H1 (cell line): ENCODE measurements at regions of chr20 and their contacts with region 1.

Region 1: GRCh38 chr20:36886859-36887751 is 11.2 kb downstream of the TLDC2 start:
- DNase-seq: peak; percentile 86 to 99
- H3K4me3 ChIP-seq: 0 out of 8 replicates have a peak overlapping the region, but pooled peaks of 1 of the 4 experiments have one; percentile 19
- H3K27ac ChIP-seq: no peak overlapping the region; the same call in 1 of the 2 replicates
- H3K4me1 ChIP-seq: peaks cover 4 to 12% (median 7%) of the 10 kb centered on the region in 4 experiments
- H3K27me3 ChIP-seq: no peaks in the 10 kb centered on the region
- CTCF ChIP-seq: peak; percentile 92 to 98 (median 92)
- EP300 ChIP-seq: no peak; a peak in 1 of 3 replicates
- POLR2A ChIP-seq: no peak
- RAD21 ChIP-seq: peak; percentile 98

Region 2: GRCh38 chr20:36700438-36700837 is 186.7 kb before region 1 on chr20:
- CTCF ChIA-PET with region 1: no interaction called
- POLR2A ChIA-PET with region 1: no interaction called
- DNase-seq: no peak
- H3K4me3 ChIP-seq: no peak overlapping the region
- H3K27ac ChIP-seq: no peak overlapping the region
- H3K4me1 ChIP-seq: peaks cover 0 to 12% (median 2%) of the 10 kb centered on the region in 4 experiments; a peak in 2 of 7 replicates
- H3K27me3 ChIP-seq: no peaks in the 10 kb centered on the region
- CTCF ChIP-seq: no peak
- EP300 ChIP-seq: no peak
- POLR2A ChIP-seq: no peak
- RAD21 ChIP-seq: no peak

Region 3: GRCh38 chr20:36745927-36746659 is 141.0 kb before region 1 on chr20 and contains the start of gene NDRG3:
- CTCF ChIA-PET with region 1: interaction called, 10 read pairs
- POLR2A ChIA-PET with region 1: no interaction called
- DNase-seq: peak; percentile 85 to 89
- H3K4me3 ChIP-seq: peak within 1 kb of the TSS; percentile 60 to 92 (median 87)
- H3K27ac ChIP-seq: peak within 1 kb of the TSS; percentile 22; the same call in 1 of the 2 replicates
- H3K4me1 ChIP-seq: peaks cover 0 to 7% (median 4%) of the 10 kb centered on the region in 4 experiments; a peak in 4 of 7 replicates
- H3K27me3 ChIP-seq: no peaks in the 10 kb centered on the region
- CTCF ChIP-seq: no peak
- EP300 ChIP-seq: no peak
- POLR2A ChIP-seq: peak in 1 of 2 experiments; percentile 28; a peak in 1 of 3 replicates
- RAD21 ChIP-seq: no peak; a peak in 2 of 4 replicates
- total RNA-seq, gene NDRG3: 32.3 and 32.5 TPM in 2 replicates

Region 4: DNA sequence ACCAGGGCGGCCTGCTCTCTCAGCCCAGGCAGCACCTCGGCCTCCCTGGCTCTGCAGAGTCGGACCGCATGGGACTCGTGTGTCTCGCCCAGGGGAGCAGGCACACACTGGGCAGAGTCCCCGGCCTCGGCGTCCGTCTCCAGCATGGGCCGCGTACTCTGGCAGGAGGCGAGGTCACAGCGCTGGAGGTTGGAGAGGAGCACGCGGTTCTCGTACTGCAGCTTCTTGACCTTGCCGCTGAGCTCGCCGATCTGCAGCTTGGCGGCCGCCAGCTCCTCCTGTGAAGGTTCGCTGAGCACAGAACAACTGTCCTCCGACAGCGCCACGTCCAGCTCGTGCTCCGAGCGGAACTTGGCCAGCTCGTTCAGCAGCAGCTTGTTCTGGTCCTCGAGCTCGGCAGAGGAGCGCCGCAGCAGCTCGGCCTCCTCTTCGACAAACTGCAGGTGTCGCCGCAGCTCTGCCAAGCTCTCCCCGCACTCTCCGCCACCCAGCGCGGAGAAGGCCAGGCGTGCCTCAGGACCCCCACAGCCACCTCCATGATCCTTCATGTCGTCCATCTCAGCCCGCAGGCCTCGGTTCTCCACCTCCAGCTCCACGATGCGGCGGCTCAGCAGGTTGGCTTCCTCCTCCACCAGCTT is 71.5 kb before region 1 on chr20:
- CTCF ChIA-PET with region 1: interaction called, 27 read pairs
- POLR2A ChIA-PET with region 1: no interaction called
- DNase-seq: no peak
- H3K4me3 ChIP-seq: no peak overlapping the region
- H3K27ac ChIP-seq: no peak overlapping the region
- H3K4me1 ChIP-seq: peaks cover 3 to 6% (median 5%) of the 10 kb centered on the region in 4 experiments; a peak in 5 of 7 replicates
- H3K27me3 ChIP-seq: no peaks in the 10 kb centered on the region
- CTCF ChIP-seq: peak; percentile 27 to 38 (median 37)
- EP300 ChIP-seq: no peak
- POLR2A ChIP-seq: no peak
- RAD21 ChIP-seq: peak; percentile 56 to 62

Region 5: GRCh38 chr20:36847009-36847709 is 39.9 kb before region 1 on chr20:
- CTCF ChIA-PET with region 1: interaction called, 11 read pairs
- POLR2A ChIA-PET with region 1: interaction called, 6 read pairs
- DNase-seq: no peak
- H3K4me3 ChIP-seq: no peak overlapping the region
- H3K27ac ChIP-seq: no peak overlapping the region
- H3K4me1 ChIP-seq: peaks cover 0 to 7% (median 4%) of the 10 kb centered on the region in 4 experiments; a peak in 4 of 7 replicates
- H3K27me3 ChIP-seq: no peaks in the 10 kb centered on the region
- CTCF ChIP-seq: no peak
- EP300 ChIP-seq: no peak
- POLR2A ChIP-seq: no peak
- RAD21 ChIP-seq: no peak

Region 6: DNA sequence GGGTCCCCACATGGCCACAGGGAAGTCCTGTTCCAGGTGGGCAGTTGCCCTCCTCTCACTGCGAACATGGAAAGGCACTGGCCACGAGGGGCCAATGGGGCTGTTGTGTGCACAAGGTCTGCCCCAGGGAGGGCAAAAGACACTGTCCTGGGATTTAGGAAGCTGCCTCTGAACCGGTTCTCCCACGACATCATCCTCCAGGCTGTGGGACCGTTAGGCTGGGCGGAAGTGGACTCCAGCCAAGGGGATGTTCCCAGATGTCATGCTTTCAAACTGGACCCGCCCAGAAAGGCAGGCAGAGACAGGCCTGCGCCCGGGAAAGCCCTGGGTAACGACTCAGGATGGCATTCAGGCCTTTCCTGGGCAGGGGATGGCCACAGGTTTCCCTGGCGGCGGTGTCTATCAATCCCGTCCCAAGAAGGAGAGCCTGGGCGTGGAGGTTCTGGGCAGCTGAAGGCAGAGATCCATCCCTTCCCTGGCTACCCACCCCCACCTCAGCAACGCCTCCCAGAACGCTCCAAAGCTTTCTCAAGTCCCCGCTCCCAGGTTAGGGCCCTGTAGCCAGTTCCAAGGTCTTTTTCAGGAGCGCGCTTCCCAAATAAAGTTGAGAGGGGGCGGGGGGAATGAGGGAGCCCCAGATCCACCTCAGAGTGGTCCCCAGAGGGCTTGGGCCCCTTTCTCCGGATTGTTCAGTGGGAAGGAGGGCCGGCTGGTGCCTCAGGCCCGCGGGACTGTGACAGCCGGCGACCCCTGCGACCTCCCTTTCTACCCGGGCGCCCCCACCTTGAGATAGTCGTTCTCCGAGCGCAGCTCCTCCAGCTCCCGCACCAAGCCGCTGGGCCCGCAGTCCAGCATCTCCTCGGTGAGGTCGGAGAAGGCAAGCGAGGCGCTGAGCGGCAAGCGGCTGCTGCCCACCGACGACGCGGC is 25.0 kb before region 1 on chr20:
- CTCF ChIA-PET with region 1: interaction called, 13 read pairs
- POLR2A ChIA-PET with region 1: interaction called, 7 read pairs
- DNase-seq: peak in 1 of 2 experiments; percentile 61
- H3K4me3 ChIP-seq: peak overlapping the region; percentile 44 to 70 (median 50)
- H3K27ac ChIP-seq: no peak overlapping the region
- H3K4me1 ChIP-seq: peaks cover 3 to 23% (median 17%) of the 10 kb centered on the region in 4 experiments
- H3K27me3 ChIP-seq: peaks cover 0 to 10% (median 6%) of the 10 kb centered on the region in 4 experiments; a peak in 4 of 7 replicates
- CTCF ChIP-seq: no peak
- EP300 ChIP-seq: no peak
- POLR2A ChIP-seq: peak in 1 of 2 experiments; percentile 54; a peak in 2 of 3 replicates
- RAD21 ChIP-seq: no peak

Region 7: DNA sequence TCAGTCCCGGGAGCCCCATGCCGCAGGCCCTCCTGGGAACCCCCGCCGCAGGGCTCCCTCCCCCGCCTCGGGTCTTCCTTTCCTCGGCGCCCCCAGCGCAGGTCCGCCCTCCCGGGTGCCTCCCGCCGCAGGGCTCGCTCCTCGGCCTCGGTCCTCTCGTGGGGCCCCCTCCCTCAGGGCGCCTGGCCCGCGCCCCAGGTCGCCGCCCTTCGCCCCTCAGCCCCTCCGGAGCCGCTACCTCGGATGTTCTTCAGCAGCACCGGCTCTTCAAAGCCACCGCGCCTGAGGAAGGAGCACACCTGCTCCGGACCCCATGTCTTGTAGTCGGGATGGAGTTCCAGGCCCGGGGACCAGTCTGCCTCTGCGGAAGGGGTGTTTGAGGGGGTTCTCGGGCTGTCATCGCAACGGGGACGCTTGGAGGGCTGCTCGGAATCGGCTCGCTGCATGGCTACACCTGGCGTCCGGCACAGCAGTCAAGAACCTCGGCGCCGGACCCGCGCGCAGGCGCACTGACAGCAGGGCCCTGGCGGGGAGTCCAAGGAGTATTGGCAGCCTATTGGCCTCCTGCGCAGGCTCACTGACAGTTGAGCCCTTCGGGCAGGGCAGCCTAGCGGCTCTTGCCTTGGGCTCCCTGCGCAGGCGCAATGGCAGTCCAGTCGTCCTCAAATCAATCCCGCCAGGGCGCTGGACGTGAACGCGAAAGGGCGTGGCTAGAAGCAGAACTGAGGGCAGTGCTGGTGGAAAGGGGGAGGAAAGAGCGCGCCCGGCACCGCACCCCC is 64.3 kb after region 1 on chr20 and contains the start of gene SAMHD1:
- CTCF ChIA-PET with region 1: no interaction called
- POLR2A ChIA-PET with region 1: no interaction called
- DNase-seq: peak; percentile 95 to 97
- H3K4me3 ChIP-seq: peak within 1 kb of the TSS; percentile 66 to 83 (median 80)
- H3K27ac ChIP-seq: no peak within 1 kb of the TSS
- H3K4me1 ChIP-seq: peaks cover 0 to 16% (median 10%) of the 10 kb centered on the region in 4 experiments; a peak in 4 of 7 replicates
- H3K27me3 ChIP-seq: no peaks in the 10 kb centered on the region; a peak in 1 of 7 replicates
- CTCF ChIP-seq: no peak
- EP300 ChIP-seq: no peak
- POLR2A ChIP-seq: peak in 1 of 2 experiments; percentile 51; a peak in 1 of 3 replicates
- RAD21 ChIP-seq: no peak
- total RNA-seq, gene SAMHD1: 37.1 and 39.5 TPM in 2 replicates